PC-9 (cell line): ENCODE measurements at regions of chr10 and their contacts with region 1.

Region 1: GRCh38 chr10:74234569-74234968 is 83.5 kb downstream of the ADK start:
- DNase-seq: no peak
- H3K4me3 ChIP-seq: no peak overlapping the region
- H3K27ac ChIP-seq: 0 out of 2 replicates have a peak overlapping the region, but pooled peaks have one; percentile 38
- H3K4me1 ChIP-seq: peaks cover 18% of the 10 kb centered on the region
- H3K27me3 ChIP-seq: no peaks in the 10 kb centered on the region
- CTCF ChIP-seq: peak; percentile 73

Region 2: GRCh38 chr10:74176380-74177139 is 58.0 kb before region 1 on chr10:
- CTCF ChIA-PET with region 1: interaction called, 3 read pairs
- POLR2A ChIA-PET with region 1: interaction called, 3 read pairs
- intact Hi-C with region 1: loop called (anchors 1 kb)
- DNase-seq: peak; percentile 91 to 97
- H3K4me3 ChIP-seq: peak overlapping the region; percentile 90
- H3K27ac ChIP-seq: peak overlapping the region; percentile 79
- H3K4me1 ChIP-seq: peaks cover 33% of the 10 kb centered on the region
- H3K27me3 ChIP-seq: no peaks in the 10 kb centered on the region
- CTCF ChIP-seq: no peak

Region 3: DNA sequence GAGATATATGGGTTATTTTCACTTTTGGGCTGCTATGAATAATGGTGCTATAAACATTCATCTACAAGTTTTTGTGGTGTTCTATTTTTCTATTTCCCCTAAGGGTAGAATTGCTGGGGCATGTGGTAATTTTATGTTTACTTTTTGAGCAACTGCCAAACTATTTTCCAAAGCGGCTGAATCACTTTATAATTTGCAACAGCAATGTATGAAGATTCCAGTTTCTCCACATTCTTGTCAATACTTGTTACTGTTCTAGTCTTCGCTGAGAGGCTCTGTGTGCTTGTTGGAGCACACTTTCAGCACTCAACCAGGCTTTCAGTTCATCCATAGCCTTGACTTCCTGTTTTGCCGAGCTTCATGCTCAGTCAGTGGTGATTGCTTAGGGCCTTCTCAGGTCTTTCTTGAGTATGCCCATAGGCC is 44.6 kb before region 1 on chr10:
- CTCF ChIA-PET with region 1: no interaction called
- POLR2A ChIA-PET with region 1: no interaction called
- intact Hi-C with region 1: loop called (anchors 2 kb)
- DNase-seq: peak; percentile 70 to 98
- H3K4me3 ChIP-seq: peak overlapping the region; percentile 50; the same call in 1 of the 2 replicates
- H3K27ac ChIP-seq: peak overlapping the region; percentile 96
- H3K4me1 ChIP-seq: peaks cover 74% of the 10 kb centered on the region
- H3K27me3 ChIP-seq: no peaks in the 10 kb centered on the region
- CTCF ChIP-seq: no peak

Region 4: DNA sequence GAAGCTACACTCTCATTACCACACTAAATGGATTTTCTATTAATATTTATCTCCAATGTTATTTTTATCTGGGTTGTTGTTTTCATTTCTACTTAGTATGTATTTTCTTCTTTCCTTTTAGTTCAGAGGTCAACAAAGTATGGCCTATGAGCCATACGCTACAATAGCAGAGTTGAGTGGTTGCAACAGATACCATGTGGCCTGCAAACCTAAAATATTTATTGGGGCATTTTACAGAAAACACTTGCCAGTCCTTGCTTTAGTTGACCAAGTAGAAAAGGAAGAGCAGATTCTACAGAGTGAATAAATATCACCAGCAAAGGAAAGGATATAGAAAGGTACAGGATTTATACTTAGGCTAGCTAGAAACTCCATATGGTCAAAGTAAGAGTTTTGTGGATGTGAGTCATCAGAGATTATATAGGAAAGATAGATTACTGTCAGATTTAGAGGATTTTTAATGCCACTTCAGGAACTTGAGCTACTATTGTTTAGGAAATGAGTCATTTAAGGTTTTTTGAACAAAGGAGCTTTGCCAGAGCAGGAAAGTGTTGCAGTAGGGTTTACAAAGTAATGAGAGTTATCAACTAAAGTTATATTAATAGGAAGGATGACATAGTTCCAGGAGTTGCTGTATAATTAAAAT is 268.5 kb after region 1 on chr10:
- CTCF ChIA-PET with region 1: no interaction called
- POLR2A ChIA-PET with region 1: interaction called, 11 read pairs
- intact Hi-C with region 1: no loop called
- DNase-seq: peak in 1 of 2 experiments; percentile 74
- H3K4me3 ChIP-seq: no peak overlapping the region
- H3K27ac ChIP-seq: peak overlapping the region; percentile 45
- H3K4me1 ChIP-seq: peaks cover 24% of the 10 kb centered on the region
- H3K27me3 ChIP-seq: no peaks in the 10 kb centered on the region
- CTCF ChIP-seq: no peak

Region 5: DNA sequence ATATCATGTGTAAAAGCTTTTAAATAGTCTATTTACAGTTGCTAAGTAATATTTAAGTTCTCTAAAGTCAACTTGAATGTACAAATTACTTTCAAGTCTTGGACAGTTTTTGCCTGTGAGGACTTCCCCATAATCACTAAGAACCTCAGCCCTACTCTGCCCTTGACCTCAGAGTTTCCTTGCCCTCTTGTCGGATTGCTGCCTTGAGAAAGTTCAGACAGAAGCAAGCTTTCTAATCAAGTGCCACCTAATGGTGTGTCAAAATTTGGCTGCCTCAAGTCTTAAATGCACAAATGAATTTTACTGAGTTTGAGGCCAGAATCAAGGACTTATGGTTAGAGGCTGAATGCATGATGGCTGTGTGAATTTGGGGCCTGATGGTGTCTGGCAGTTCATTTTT is 503.5 kb after region 1 on chr10:
- CTCF ChIA-PET with region 1: no interaction called
- POLR2A ChIA-PET with region 1: interaction called, 29 read pairs
- intact Hi-C with region 1: no loop called
- DNase-seq: no peak
- H3K4me3 ChIP-seq: no peak overlapping the region
- H3K27ac ChIP-seq: no peak overlapping the region
- H3K4me1 ChIP-seq: no peaks in the 10 kb centered on the region
- H3K27me3 ChIP-seq: no peaks in the 10 kb centered on the region
- CTCF ChIP-seq: no peak